CD4-positive, alpha-beta T cell (primary cell): ENCODE measurements at regions of chr17 and their contacts with region 1.

Region 1: DNA sequence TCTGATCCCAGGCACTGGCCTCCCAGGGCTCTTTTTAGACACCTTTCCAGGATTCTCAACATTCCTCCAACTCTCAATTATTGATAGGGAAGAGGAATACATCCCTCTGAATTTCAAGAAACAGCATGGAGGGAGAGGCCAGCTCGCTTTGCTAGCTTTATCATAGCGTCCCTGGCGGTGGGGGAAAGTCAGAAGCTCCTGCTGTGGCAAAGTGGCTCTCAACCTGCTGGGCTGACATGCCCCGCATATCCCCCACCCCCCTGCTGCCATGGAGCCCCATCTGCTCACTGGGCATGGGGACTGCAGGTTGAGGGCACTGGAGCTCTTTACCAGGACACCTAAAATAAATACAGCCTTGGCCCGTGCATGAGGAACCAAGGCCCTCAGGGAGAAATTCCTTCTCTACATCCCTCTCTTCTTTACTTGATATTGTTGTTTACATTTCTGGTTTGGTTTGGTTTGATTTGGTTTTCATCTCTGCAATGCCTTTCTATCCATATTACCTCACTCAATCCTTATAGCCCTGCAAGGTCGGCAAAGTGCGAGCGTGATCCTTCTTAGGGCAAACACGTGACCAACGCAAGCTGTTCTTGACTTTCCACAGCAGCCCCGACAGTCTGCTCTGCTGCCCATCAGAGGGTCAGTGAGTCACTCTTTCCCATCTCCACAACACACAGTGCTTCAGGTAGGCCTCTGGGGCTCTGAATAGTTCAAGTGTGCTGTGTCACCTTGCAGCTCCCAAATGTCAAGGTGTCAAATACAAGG is 140.1 kb downstream of the SLC39A11 start:
- DNase-seq: no peak
- ATAC-seq: no peak
- H3K4me3 ChIP-seq: no peak overlapping the region
- H3K4me3 Mint-ChIP-seq: no peak overlapping the region
- H3K27ac ChIP-seq: no peak overlapping the region
- H3K27ac Mint-ChIP-seq: no peak overlapping the region
- H3K4me1 ChIP-seq: no peaks in the 10 kb centered on the region
- H3K4me1 Mint-ChIP-seq: no peaks in the 10 kb centered on the region
- H3K27me3 ChIP-seq: no peaks in the 10 kb centered on the region
- H3K27me3 Mint-ChIP-seq: no peaks in the 10 kb centered on the region
- CTCF ChIP-seq: no peak

Region 2: DNA sequence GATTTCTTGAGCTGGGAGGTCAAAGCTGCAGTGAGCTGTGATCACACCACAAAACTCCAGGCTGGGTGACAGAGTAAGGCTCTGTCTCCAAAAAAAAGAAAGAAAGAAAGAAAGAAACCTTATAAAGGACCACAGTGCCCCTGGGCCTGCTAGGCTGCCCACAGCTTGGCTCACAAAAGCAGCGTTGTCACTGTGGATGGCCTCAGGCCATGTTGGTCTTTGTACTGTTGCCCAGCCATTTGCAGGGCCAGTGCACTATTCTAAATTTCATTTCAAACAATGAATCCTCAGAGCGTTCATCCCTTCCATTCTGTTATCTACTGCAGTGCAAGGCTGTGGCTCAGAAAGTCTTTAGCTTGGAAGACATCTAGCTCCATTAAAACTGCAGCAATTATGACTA is 68.3 kb before region 1 on chr17:
- CTCF ChIA-PET with region 1: no interaction called
- POLR2A ChIA-PET with region 1: no interaction called
- intact Hi-C with region 1: loop called in 1 of 2 experiments (anchors 2 kb)
- DNase-seq: no peak
- ATAC-seq: no peak
- H3K4me3 ChIP-seq: no peak overlapping the region
- H3K4me3 Mint-ChIP-seq: no peak overlapping the region
- H3K27ac ChIP-seq: no peak overlapping the region
- H3K27ac Mint-ChIP-seq: no peak overlapping the region
- H3K4me1 ChIP-seq: no peaks in the 10 kb centered on the region
- H3K4me1 Mint-ChIP-seq: no peaks in the 10 kb centered on the region
- H3K27me3 ChIP-seq: no peaks in the 10 kb centered on the region
- H3K27me3 Mint-ChIP-seq: no peaks in the 10 kb centered on the region
- CTCF ChIP-seq: no peak

Region 3: DNA sequence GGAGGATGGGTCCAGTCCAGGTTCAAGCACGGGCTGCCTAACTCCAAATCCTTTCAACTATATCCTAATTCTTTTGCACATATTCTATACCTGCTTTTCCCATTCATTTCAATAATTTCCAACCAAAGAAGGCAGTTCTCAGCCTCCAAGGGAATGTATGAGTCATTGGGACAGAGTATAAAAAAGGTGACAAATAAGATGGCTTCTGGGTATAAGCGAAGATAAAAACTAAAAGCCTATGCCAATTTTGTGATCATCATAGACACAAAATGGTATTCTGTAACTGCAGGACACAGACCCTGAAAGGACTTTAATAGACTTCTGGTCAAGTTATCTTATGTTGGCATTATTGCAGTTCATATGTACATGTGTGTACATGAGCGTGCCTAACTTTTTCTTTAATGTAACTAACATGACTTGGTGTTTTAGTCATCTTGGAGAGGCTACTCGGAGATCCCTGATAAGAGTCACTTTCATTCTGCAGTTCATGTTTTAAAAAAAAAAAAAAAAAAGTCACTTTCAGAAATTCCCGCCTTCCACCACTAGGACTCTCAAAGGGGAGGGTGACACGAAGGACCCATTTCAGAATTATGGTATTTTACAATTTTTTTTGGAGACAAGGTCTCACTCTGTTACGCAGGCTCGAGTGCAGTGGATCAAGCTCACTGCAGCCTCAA is 257.7 kb after region 1 on chr17:
- CTCF ChIA-PET with region 1: no interaction called
- POLR2A ChIA-PET with region 1: no interaction called
- intact Hi-C with region 1: no loop called
- DNase-seq: peak in 2 of 14 experiments; percentile 48 to 50
- ATAC-seq: peak; percentile 37
- H3K4me3 ChIP-seq: no peak overlapping the region
- H3K4me3 Mint-ChIP-seq: peak overlapping the region; percentile 20
- H3K27ac ChIP-seq: peak overlapping the region in 1 of 2 donors; percentile 0
- H3K27ac Mint-ChIP-seq: peak overlapping the region; percentile 86
- H3K4me1 ChIP-seq: peaks cover 19% of the 10 kb centered on the region
- H3K4me1 Mint-ChIP-seq: peaks cover 39% of the 10 kb centered on the region
- H3K27me3 ChIP-seq: no peaks in the 10 kb centered on the region
- H3K27me3 Mint-ChIP-seq: no peaks in the 10 kb centered on the region
- CTCF ChIP-seq: no peak